Posterior cingulate gyrus (tissue), 11 donors: ENCODE measurements at regions of chr12 and their contacts with region 1.

Region 1: GRCh38 chr12:64403707-64404469 is at the start of gene XPOT:
- DNase-seq: peak; percentile 84 to 98 (median 90)

Region 2: DNA sequence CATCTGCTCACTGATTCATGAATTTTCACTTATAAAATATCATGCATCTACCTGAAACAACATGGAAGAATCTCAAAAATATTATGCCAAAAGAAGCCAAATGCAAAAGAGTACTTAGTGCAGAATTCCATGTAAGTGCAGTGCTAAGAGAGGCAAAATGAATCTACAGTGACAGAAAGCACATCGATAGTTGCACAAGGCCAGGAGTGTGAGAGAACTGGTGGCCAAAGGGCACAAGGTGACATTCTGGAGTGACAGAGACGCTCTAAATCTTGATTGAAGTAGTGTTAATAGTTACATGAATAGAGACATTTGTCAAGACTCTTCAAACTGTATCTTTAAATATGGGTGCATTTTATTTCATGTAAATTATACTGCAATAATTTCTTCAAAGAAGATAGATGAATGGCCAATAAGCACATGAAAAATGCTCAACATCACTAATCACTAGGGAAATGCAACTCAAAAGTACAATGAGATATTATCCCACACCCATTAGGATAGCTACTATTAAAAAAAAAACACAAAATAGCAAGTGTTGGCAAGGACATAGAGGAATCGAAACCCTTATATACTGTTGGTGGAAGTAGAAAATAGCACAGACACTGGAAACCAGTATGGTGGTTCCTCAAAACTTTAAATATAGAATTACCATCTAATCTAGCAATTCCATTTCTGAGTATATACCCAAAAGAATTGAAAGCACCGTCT is 110.1 kb before region 1 on chr12:
- intact Hi-C with region 1: no loop called
- DNase-seq: no peak

Region 3: GRCh38 chr12:64451687-64452558 is 48.0 kb after region 1 on chr12 and contains the start of gene TBK1:
- intact Hi-C with region 1: loop called (anchors 2 kb)
- DNase-seq: peak; percentile 85 to 99 (median 91)